ENCODE measurements at regions of chr10 and their contacts with region 1.

Region 1: DNA sequence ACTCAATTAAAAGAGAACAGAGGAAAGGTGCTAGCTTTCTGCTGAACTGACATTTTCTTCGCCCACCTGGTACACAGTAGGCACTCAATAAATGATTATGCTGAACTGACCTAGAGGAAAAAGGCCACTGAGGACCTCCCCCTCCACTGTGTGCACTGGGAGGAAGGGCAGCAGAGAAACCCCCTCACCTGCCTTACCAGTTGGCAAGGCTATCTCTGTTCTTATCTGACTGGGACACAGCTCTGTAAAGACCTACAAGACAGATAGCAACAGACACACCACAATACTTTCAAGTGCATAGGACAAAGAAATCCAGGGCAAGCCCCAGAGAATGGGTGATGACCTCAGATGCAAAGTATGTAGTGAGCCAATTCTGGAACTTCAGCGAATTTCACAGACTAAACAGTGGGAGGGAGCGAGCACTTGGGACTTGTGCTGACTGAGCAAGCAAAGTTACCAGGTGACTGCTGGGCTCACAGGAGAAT is 30.4 kb downstream of the PDLIM1 start:
- DNase-seq: peak; percentile 21
- H3K4me3 ChIP-seq: no peak overlapping the region
- H3K27ac ChIP-seq: peak overlapping the region; percentile 22
- H3K4me1 ChIP-seq: peaks cover 4% of the 10 kb centered on the region
- H3K27me3 ChIP-seq: no peaks in the 10 kb centered on the region
- CTCF ChIP-seq: no peak

Region 2: DNA sequence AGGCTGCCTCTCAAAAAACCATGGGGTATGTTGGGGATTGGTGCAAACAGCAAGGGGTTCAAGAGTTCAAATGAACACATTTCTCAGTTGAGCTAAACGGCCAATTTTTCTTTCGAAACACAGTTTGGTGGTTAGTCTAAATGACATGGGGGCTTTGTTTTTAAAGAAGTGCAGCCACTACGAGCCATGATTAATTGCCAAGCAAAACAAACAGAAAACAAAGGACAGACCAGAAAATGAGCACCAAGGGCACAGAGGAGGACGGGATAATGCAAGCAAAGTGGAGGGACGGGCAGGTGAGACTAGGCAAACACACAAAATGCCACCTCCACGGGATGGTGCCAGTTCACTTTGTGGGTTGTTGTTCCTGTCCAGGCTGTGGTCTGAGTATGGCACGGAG is 94.9 kb after region 1 on chr10:
- intact Hi-C with region 1: loop called (anchors 5 kb)
- DNase-seq: no peak
- H3K4me3 ChIP-seq: no peak overlapping the region
- H3K27ac ChIP-seq: no peak overlapping the region
- H3K4me1 ChIP-seq: no peaks in the 10 kb centered on the region
- H3K27me3 ChIP-seq: no peaks in the 10 kb centered on the region
- CTCF ChIP-seq: no peak

Measured in colonic mucosa (tissue), 4 donors.